Activated naive CD4-positive, alpha-beta T cell treated with anti-CD3 and anti-CD28 coated beads for 36 hours (primary cell): ENCODE measurements at regions of chr15 and their contacts with region 1.

Region 1: GRCh38 chr15:51829360-51830275 is at the start of gene TMOD3:
- DNase-seq: peak; percentile 91
- H3K4me3 Mint-ChIP-seq: peak within 1 kb of the TSS; percentile 89
- H3K27ac Mint-ChIP-seq: peak within 1 kb of the TSS; percentile 83
- H3K4me1 Mint-ChIP-seq: peaks cover 39% of the 10 kb centered on the region
- H3K27me3 Mint-ChIP-seq: no peaks in the 10 kb centered on the region
- total RNA-seq, gene TMOD3: 45.9 to 52.8 TPM

Region 2: GRCh38 chr15:51688863-51689262 is 140.8 kb before region 1 on chr15:
- CTCF ChIA-PET with region 1: no interaction called
- intact Hi-C with region 1: no loop called
- DNase-seq: no peak
- H3K4me3 Mint-ChIP-seq: no peak overlapping the region
- H3K27ac Mint-ChIP-seq: no peak overlapping the region
- H3K4me1 Mint-ChIP-seq: peaks cover 15% of the 10 kb centered on the region
- H3K27me3 Mint-ChIP-seq: peaks cover 10% of the 10 kb centered on the region

Region 3: GRCh38 chr15:51842852-51843737 is 13.5 kb after region 1 on chr15:
- CTCF ChIA-PET with region 1: interaction called, 3 read pairs
- intact Hi-C with region 1: loop called (anchors 1 kb)
- DNase-seq: peak; percentile 54
- H3K4me3 Mint-ChIP-seq: no peak overlapping the region
- H3K27ac Mint-ChIP-seq: no peak overlapping the region
- H3K4me1 Mint-ChIP-seq: peaks cover 69% of the 10 kb centered on the region
- H3K27me3 Mint-ChIP-seq: no peaks in the 10 kb centered on the region

Region 4: DNA sequence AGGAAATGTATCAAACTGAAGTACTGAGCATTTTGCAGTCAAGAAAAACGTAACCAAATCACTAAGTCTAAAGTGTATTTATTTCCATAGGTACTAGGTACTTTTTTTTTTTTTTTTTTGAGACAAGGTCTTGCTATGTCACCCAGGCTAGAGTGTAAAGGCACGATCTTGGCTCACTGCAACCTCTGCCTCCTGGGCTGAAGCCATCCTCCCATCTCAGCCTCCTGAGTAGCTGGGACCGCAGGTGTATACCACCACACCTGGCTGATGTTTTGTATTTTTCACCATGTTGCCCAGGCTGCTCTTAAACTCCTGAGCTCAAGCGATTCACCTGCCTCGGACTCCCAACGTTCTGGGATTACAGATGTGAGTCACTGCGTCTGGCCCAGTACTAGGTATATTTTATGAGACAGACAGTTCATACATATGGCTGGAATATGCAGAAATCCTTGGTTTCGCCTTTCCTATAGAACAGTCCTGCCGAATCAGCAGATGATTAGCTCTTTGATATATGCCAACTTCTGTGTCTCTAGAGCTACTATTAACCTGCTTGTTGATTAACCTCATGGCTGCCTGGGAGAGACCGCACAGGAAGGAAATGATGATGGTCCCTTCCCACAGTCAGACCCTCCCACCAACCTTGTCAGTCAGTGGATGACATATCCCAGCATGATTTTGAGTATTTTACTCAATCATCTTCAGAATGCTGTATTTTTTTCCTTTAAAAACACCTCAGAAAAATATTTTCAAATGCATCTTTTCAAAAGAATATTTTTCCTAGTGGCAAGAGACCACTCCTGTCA is 32.1 kb after region 1 on chr15:
- CTCF ChIA-PET with region 1: no interaction called
- intact Hi-C with region 1: loop called (anchors 2 kb)
- DNase-seq: peak; percentile 79
- H3K4me3 Mint-ChIP-seq: no peak overlapping the region
- H3K27ac Mint-ChIP-seq: peak overlapping the region; percentile 47
- H3K4me1 Mint-ChIP-seq: peaks cover 68% of the 10 kb centered on the region
- H3K27me3 Mint-ChIP-seq: no peaks in the 10 kb centered on the region

Region 5: GRCh38 chr15:51907136-51907914 is 77.7 kb after region 1 on chr15:
- CTCF ChIA-PET with region 1: interaction called, 3 read pairs
- intact Hi-C with region 1: loop called (anchors 5 kb)
- DNase-seq: no peak
- H3K4me3 Mint-ChIP-seq: no peak overlapping the region
- H3K27ac Mint-ChIP-seq: no peak overlapping the region
- H3K4me1 Mint-ChIP-seq: no peaks in the 10 kb centered on the region
- H3K27me3 Mint-ChIP-seq: no peaks in the 10 kb centered on the region

Region 6: GRCh38 chr15:51971375-51972133 is 141.9 kb after region 1 on chr15 and contains the start of gene LEO1:
- CTCF ChIA-PET with region 1: no interaction called
- intact Hi-C with region 1: loop called (anchors 2 kb)
- DNase-seq: peak; percentile 95
- H3K4me3 Mint-ChIP-seq: peak within 1 kb of the TSS; percentile 90
- H3K27ac Mint-ChIP-seq: peak within 1 kb of the TSS; percentile 96
- H3K4me1 Mint-ChIP-seq: peaks cover 24% of the 10 kb centered on the region
- H3K27me3 Mint-ChIP-seq: peaks cover 2% of the 10 kb centered on the region
- total RNA-seq, gene LEO1: 21.0 to 23.8 TPM